Activated CD4-positive, alpha-beta T cell treated with anti-CD3 and anti-CD28 coated beads for 36 hours (primary cell): ENCODE measurements at regions of chr12 and their contacts with region 1.

Region 1: DNA sequence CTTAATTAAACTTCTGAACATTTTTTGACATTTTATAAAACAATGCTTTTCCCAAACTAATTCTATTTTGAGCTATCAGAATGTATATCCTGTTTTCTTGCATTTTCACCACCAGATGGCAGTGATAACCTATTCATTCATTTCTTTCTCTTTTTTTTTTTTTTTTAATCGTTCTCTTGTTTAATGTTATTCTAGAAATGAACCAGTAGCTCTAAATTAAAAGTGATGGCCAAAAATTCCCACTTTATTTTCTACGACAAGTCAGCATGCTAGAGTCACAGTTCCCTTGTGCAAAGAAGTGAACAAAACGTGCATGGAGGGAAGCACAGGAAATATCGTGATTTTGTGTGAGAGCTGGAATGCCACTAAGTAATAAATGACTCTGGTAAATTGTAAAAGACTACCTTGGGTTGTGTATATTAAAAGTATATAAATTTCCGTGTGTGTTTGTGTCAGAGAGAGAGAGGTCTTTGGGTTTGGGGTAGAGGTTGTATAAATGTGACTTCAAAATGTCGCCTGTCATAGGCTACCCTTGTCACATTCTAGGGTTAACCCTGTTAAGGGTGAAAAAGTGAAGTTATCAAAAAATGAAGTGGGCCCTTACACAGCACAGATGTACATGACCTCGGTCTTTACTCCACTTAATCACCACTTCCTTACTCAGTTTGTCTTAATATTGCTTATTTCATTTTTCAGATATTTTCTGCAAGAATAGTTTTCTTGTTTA is 40.4 kb upstream of the LDHB start:
- DNase-seq: no peak
- ATAC-seq: no peak
- H3K4me3 Mint-ChIP-seq: no peak overlapping the region
- H3K27ac Mint-ChIP-seq: no peak overlapping the region
- H3K4me1 Mint-ChIP-seq: peaks cover 12% of the 10 kb centered on the region
- H3K27me3 Mint-ChIP-seq: no peaks in the 10 kb centered on the region

Region 2: DNA sequence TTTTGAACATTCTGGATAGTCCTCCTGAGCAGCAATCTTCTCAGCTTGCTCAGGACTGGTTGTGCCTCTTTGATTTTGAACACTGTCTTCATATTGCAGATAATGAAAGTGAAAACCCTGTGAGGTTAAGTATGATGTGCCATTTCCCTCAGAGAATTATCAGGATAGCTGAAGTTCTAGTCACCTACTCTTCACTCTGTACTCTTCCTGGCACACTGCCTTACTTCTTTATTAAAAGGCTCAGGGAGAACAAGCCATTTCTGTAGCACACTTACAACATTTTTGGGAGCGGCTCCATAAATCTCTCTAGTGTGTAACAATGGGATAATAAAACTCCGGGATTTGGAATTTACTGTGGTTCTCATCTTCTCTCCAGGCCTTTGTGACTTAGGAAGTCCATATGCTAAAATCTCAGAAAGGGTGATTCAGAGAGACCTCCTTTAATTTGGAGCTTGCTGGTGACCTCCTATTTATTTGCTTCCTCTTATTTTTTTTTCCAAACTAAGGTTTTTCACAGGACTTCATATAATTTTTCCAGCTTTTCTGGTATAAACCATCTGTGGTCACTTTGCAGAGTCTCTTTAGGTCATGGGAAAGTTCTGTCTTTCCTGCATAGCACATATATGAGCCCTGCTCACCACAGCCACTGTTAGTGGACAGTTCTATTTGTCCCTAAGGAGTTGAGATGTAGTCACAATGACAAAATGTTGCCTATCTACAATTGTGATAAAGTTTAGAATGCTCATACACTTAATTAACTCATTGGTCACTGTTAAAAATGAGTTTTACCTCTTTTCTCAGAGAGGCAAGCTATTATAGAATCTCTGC is 13.1 kb after region 1 on chr12:
- CTCF ChIA-PET with region 1: interaction called, 11 read pairs
- POLR2A ChIA-PET with region 1: no interaction called
- intact Hi-C with region 1: no loop called
- DNase-seq: no peak
- ATAC-seq: peak; percentile 65
- H3K4me3 Mint-ChIP-seq: no peak overlapping the region
- H3K27ac Mint-ChIP-seq: no peak overlapping the region
- H3K4me1 Mint-ChIP-seq: peaks cover 7% of the 10 kb centered on the region
- H3K27me3 Mint-ChIP-seq: peaks cover 2% of the 10 kb centered on the region

Region 3: GRCh38 chr12:21989819-21990412 is 291.8 kb after region 1 on chr12:
- CTCF ChIA-PET with region 1: interaction called, 15 read pairs
- POLR2A ChIA-PET with region 1: no interaction called
- intact Hi-C with region 1: loop called (anchors 2 to 5 kb)
- DNase-seq: no peak
- ATAC-seq: no peak
- H3K4me3 Mint-ChIP-seq: no peak overlapping the region
- H3K27ac Mint-ChIP-seq: no peak overlapping the region
- H3K4me1 Mint-ChIP-seq: peaks cover 9% of the 10 kb centered on the region
- H3K27me3 Mint-ChIP-seq: peaks cover 7% of the 10 kb centered on the region

Region 4: DNA sequence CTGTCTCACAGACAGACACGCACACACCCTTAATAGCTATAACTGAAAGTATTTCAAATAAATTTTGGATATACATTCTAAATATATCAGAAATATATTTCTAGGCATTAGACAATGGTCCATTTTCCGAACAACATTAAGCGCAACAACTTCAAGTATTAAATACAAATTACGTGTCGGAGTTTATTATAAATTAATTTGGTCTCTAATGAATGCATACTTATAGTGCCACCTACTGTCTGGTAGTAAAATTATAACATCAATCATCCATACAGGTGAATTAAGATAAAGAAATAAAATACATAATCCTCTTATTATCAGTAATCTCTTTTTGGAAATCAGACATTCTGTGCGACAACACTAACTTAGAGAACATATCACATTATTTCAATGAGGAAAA is 320.8 kb after region 1 on chr12:
- CTCF ChIA-PET with region 1: interaction called, 18 read pairs
- POLR2A ChIA-PET with region 1: no interaction called
- intact Hi-C with region 1: loop called (anchors 1 kb)
- DNase-seq: no peak
- ATAC-seq: no peak
- H3K4me3 Mint-ChIP-seq: no peak overlapping the region
- H3K27ac Mint-ChIP-seq: no peak overlapping the region
- H3K4me1 Mint-ChIP-seq: no peaks in the 10 kb centered on the region
- H3K27me3 Mint-ChIP-seq: peaks cover 6% of the 10 kb centered on the region

Region 5: DNA sequence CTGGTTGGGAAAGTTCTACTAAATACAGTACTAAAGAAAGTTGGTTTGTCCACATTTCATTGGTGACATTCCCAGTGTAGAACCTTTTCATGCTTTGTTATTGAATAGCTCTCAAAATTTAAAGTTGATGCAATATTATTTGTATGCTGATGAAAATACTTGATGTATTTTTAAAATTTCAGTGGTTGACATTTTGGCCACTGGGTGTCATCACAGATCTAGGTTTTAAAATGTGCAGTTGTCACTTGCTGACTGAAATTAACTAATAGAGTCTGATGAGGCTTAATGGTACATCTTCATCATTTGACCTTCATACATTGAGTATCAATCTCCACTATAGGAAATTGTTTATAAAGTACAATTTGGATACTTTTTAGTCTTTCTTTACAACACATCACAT is 385.1 kb after region 1 on chr12:
- CTCF ChIA-PET with region 1: no interaction called
- POLR2A ChIA-PET with region 1: no interaction called
- intact Hi-C with region 1: loop called in 1 of 2 experiments (anchors 5 kb)
- DNase-seq: peak; percentile 16
- ATAC-seq: no peak
- H3K4me3 Mint-ChIP-seq: no peak overlapping the region
- H3K27ac Mint-ChIP-seq: no peak overlapping the region
- H3K4me1 Mint-ChIP-seq: no peaks in the 10 kb centered on the region
- H3K27me3 Mint-ChIP-seq: no peaks in the 10 kb centered on the region

Region 6: GRCh38 chr12:22443379-22444316 is 745.6 kb after region 1 on chr12:
- CTCF ChIA-PET with region 1: interaction called, 4 read pairs
- POLR2A ChIA-PET with region 1: no interaction called
- intact Hi-C with region 1: loop called (anchors 1 kb)
- DNase-seq: peak; percentile 72
- ATAC-seq: peak; percentile 99
- H3K4me3 Mint-ChIP-seq: no peak overlapping the region
- H3K27ac Mint-ChIP-seq: no peak overlapping the region
- H3K4me1 Mint-ChIP-seq: no peaks in the 10 kb centered on the region
- H3K27me3 Mint-ChIP-seq: no peaks in the 10 kb centered on the region